ENCODE measurements at regions of chr2 and their contacts with region 1.

Region 1: DNA sequence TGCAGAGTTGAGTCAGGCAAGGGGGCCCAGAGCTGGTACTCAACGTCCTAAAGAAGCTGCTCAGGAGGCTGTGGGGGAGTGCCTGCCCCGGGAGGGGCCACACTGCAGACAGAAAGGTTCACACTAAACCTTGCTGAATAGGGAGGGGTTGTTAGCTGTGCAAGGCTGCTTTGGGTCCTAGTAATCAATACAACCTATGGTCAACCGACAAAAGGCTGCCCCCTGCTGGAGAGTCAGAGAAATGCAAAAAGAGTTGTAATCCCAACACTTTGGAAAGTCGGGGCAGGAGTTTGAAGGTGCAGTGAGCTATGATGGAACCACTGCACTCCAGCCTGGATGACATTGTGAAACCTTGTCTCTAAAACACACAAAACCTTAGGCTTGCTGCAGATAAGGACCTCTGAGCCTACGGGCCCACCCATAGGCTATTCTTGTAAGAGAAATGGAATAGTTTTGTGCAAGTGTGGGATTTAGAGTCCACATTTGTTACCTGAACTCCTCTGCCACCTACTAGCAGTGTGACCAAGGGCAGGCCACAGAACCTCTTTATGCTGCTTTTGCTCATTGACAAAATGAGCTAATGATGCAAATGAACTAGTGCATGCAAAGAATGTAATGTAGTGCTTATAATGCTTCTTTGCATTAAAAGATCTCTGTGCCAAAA is 81.5 kb downstream of the PRPF40A start:
- DNase-seq: no peak
- H3K4me3 ChIP-seq: no peak overlapping the region
- H3K27ac ChIP-seq: no peak overlapping the region
- H3K27me3 ChIP-seq: no peaks in the 10 kb centered on the region
- CTCF ChIP-seq: peak; percentile 80

Region 2: DNA sequence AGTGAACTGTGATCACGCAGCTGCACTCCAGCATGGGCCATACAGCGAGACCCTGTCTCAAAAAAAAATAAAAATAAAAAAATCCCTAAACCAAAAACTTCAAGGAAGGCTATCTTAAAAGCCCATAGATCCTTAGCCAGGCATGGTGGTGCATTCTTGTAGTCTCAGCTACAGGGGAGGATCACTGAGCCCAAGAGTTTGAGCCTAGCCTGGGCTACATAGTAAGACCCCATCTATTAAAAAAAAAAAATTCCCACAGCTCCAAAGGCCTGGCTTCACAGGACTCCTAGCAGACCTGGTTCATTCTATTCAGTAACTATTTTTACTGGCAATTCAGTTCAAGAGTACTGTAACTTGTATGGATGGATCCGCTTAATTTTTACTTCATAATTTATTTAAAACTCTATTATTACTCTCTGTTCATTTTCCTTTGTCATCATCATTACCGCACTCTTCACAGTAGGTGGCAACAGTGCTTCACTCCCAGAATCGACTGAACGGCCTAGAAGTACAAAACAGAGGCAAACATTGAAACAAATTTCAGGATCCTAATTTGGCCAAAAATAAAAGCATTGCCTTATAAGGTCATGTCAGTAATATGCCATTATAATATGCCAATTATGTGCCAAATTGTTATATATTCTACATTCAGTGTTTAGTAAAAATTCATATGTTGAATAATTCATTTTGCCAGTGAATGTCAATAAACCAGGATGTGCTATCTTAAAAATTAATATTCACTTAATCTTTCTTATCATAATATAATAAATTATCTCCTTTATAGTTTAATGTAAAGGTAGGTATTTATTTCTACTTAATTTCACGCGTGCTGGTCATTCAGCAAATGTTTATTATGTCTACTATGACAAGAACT is 445.9 kb before region 1 on chr2:
- CTCF ChIA-PET with region 1: interaction called, 75 read pairs
- POLR2A ChIA-PET with region 1: no interaction called
- DNase-seq: peak; percentile 58
- H3K4me3 ChIP-seq: no peak overlapping the region
- H3K27ac ChIP-seq: no peak overlapping the region
- H3K27me3 ChIP-seq: no peaks in the 10 kb centered on the region
- CTCF ChIP-seq: peak; percentile 87

Region 3: DNA sequence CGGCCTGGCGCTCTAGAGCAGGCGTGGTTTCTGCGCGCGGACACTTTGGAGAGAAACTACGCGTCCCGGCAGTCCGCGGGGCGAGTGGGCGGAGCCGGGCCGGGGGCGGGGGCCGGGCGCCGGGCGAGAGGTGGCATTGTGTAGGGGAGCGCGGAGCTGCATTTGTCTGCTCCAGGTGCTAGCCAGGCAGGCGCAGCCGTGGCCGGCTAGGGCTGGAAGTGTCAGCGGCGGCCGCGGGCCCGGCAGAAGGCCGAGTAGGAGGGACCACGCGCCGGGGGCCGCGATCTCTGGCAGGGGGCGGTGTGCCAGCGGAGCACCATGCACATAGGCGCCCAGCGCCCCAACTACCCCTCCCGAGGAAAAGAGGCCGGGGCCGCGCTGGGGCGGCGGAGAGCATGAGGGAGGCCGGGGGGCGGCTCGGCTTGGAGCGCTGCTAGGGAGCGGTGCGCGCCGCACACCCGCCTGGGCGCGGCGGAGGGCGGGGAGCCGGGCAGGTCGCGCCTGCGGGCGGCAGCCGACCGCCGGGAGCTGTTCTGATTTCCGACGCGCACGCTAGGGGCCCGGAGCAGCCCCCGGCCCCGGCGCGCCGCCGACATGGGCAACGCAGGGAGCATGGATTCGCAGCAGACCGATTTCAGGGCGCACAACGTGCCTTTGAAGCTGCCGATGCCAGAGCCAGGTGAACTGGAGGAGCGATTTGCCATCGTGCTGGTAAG is 300.6 kb before region 1 on chr2 and contains the start of gene FMNL2:
- CTCF ChIA-PET with region 1: interaction called, 19 read pairs
- POLR2A ChIA-PET with region 1: no interaction called
- DNase-seq: peak; percentile 18
- H3K4me3 ChIP-seq: peak within 1 kb of the TSS; percentile 88
- H3K27ac ChIP-seq: no peak within 1 kb of the TSS
- H3K27me3 ChIP-seq: no peaks in the 10 kb centered on the region
- CTCF ChIP-seq: 0 out of 2 replicates have a peak, but pooled peaks have one; percentile 2
- polyA plus RNA-seq, gene FMNL2: 16.2 and 22.0 TPM in 2 replicates

Region 4: DNA sequence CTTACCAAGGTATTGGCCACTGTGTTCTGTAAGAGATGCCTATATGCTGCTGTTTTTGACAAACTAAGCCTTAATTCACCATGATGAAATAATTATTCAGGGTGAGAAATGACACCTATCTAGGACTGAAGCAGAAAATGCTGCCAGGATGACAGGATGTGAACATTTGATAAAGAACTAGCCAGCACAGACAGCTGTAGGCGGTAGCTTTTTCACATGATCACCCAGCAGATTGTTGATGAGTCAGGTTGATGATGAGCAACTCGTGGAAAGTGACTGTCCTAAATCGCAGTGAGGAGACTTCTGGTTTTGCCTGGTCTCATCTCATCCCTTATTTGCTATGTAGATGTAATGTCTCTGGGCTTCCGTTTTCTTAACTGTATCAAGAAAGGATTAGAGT is 62.6 kb before region 1 on chr2:
- CTCF ChIA-PET with region 1: interaction called, 15 read pairs
- POLR2A ChIA-PET with region 1: no interaction called
- DNase-seq: no peak
- H3K4me3 ChIP-seq: no peak overlapping the region
- H3K27ac ChIP-seq: no peak overlapping the region
- H3K27me3 ChIP-seq: no peaks in the 10 kb centered on the region
- CTCF ChIP-seq: no peak

Region 5: GRCh38 chr2:152648336-152648735 is 12.6 kb after region 1 on chr2:
- CTCF ChIA-PET with region 1: interaction called, 45 read pairs
- POLR2A ChIA-PET with region 1: no interaction called
- DNase-seq: no peak
- H3K4me3 ChIP-seq: no peak overlapping the region
- H3K27ac ChIP-seq: no peak overlapping the region
- H3K27me3 ChIP-seq: no peaks in the 10 kb centered on the region
- CTCF ChIP-seq: peak; percentile 40

Region 6: DNA sequence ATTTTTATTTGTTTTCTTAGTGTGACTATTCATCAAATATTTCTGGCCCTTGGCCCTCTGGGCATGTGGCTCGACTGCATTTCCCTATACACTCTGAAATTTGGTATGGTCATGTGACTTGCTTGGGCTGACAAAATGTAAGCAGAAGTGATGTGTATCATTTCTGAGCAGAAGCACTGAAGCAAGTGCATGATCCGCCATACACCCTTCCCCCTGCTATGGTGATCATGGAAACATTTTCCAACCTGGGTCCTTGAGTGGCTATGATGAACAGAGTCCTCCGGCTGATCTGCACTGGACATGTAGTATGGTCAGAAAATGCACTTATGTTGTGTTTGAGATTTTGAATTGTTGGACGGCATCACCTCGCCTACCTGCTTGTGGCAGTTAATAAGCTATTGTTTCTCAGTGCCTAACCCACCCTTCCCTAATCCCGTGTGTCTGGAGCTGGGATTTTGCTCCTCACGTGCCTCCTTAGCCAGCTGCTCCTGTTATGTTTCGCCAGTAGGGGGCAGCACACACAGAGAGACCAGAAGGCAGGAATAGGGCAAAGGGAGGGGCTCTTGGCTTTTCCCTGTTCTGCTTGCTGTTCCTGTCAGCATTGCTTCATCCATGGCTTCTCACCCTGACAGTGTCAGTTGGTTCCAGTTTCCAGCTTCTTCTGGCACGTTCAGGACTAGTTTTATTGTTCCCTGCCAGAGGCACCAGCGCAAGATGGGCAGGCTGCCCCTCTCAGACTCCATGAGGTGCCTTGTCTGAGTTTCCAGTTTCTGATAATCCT is 290.0 kb after region 1 on chr2:
- CTCF ChIA-PET with region 1: no interaction called
- POLR2A ChIA-PET with region 1: no interaction called
- DNase-seq: no peak
- H3K4me3 ChIP-seq: no peak overlapping the region
- H3K27ac ChIP-seq: no peak overlapping the region
- H3K27me3 ChIP-seq: no peaks in the 10 kb centered on the region
- CTCF ChIP-seq: no peak

Measured in AG04450 (cell line).